K562 (cell line): ENCODE measurements at regions of chr2 and their contacts with region 1.

Region 1: DNA sequence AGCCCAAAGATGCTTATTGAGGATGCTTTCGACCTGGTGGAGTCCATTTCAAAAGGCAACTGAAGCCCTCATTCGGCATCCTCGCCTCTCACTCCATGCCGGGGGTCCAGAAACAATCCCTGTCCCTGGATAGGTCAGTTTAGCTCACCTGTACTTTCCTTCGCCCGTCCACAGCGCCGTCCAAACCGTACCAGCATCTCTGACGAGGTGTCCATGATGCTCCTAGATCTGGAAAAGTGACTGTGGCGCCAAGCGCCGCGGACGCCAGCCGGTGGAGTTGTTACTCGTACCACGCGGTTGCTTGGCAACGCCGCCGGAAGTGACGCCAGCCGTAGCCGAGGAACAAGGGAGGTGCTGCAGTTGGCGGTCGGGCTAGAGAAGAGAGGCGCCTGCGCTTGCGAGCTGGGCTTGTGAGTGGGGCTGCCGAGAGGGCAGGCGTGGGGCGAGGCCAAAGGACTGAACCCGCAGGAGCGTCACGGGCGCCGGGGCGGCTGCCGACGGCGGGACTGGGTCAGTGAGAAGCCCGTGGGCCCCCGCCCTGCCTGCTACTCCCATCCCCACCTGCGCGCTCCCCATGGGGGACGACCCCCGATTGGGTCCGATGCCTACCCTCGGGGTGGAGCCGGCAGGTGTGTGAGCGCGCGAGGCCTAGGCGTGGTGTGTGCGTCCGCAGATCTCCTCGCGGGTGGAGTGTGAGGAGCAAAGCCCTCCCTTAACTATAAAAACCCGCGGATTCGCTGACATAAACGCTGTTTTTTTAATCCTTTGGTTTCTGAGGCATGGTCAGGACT is at the starts of genes CFAP210 and PHOSPHO2:
- DNase-seq: peak; percentile 95 to 100 (median 96)
- ATAC-seq: peak; percentile 98
- H3K4me3 ChIP-seq: peak within 1 kb of the TSS; percentile 76
- H3K27ac ChIP-seq: peak within 1 kb of the TSS; percentile 88
- H3K4me1 ChIP-seq: peaks cover 9 to 14% of the 10 kb centered on the region in 2 experiments
- H3K27me3 ChIP-seq: no peaks in the 10 kb centered on the region
- CTCF ChIP-seq: peak in 1 of 3 experiments; percentile 4; a peak in 2 of 6 replicates
- EP300 ChIP-seq: no peak
- POLR2A ChIP-seq: peak; percentile 94
- RAD21 ChIP-seq: 0 out of 4 replicates have a peak, but pooled peaks of 1 of the 2 experiments have one; percentile 15
- polyA plus RNA-seq, gene CFAP210: 1.2 to 1.3 TPM
- polyA plus RNA-seq, gene PHOSPHO2: 7.8 to 8.9 TPM

Region 2: DNA sequence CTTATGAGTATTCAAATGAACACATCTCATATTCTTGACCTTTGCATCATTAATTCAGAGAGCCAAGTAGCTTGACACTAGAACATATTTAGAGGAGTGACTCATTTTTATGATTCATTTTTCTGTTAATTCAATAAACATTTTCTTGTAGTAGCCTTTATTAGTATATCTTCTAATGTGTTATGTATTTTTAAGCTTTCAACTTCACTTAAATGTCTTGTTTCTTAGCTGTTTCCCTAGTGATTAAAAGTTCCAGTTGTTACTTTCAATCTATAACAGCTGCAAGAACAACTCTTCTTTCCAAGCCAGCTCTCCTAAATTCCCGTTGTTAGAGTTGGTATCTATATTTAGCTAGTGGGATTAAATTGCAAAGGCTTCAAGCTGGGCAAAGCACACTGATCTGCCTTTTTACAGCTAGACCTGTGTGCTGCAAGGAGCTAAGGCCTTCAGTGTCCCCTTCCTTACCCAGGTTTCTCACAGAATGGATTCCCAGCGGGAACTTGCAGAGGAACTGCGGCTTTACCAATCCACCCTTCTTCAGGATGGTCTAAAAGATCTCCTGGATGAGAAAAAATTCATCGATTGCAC is 184.9 kb before region 1 on chr2 and contains the start of gene KLHL41:
- CTCF ChIA-PET with region 1: no interaction called
- POLR2A ChIA-PET with region 1: no interaction called
- in situ Hi-C with region 1: no loop called
- intact Hi-C with region 1: no loop called
- DNase-seq: no peak
- ATAC-seq: peak; percentile 65
- H3K4me3 ChIP-seq: no peak within 1 kb of the TSS
- H3K27ac ChIP-seq: no peak within 1 kb of the TSS
- H3K4me1 ChIP-seq: peaks cover 0 to 7% of the 10 kb centered on the region in 2 experiments; a peak in 2 of 5 replicates
- H3K27me3 ChIP-seq: no peaks in the 10 kb centered on the region
- CTCF ChIP-seq: no peak
- EP300 ChIP-seq: no peak
- POLR2A ChIP-seq: no peak
- RAD21 ChIP-seq: no peak
- polyA plus RNA-seq, gene KLHL41: 0.08 to 0.13 TPM

Region 3: DNA sequence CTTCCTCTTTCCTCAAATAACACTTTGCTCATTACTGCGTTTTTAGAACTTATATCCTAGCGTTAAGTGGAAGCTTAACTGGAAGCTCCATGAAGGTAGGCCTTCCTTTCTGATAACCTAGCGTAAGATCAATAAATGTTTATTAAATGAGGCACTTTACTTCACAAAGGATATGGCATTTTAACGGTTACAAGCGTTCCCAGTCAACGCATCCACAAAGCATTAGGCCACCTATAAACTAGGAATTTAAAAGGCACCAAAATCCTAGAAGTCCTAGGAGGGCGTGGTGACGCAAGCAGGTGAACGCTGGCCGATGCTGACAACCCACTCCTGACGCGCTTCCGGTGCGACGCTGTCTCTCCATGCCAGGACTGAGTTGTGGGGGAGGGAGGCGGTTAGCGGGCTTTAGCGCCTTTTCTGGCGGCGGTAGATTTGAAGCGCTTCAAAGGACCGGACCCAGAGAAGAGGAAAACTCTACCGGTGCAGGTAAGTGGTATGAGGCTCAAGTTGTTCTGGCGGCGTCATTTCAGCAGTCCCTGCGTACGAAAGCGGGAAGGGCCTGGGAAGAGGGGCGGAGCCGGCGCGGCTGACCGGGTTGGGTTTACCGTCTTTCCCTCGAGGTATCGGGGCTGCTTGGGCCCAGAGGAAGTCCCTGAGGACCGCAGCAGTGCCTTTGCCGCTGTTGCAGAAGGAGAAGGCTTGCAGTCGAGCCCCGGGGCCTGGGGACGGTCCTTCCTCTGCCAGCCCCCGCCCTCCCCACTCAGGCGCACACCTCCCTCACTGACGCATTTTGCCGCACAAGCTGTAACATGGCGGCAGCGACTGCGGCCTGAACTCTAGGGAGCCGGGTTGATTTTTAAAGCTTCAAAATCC is 110.1 kb before region 1 on chr2 and contains the start of gene PPIG:
- CTCF ChIA-PET with region 1: no interaction called
- POLR2A ChIA-PET with region 1: no interaction called
- in situ Hi-C with region 1: loop called (anchors 5 kb)
- intact Hi-C with region 1: no loop called
- DNase-seq: peak; percentile 91 to 98 (median 94)
- ATAC-seq: peak; percentile 96
- H3K4me3 ChIP-seq: peak within 1 kb of the TSS; percentile 64
- H3K27ac ChIP-seq: peak within 1 kb of the TSS; percentile 99
- H3K4me1 ChIP-seq: peaks cover 3 to 4% of the 10 kb centered on the region in 2 experiments; a peak in 2 of 5 replicates
- H3K27me3 ChIP-seq: no peaks in the 10 kb centered on the region
- CTCF ChIP-seq: 0 out of 6 replicates have a peak, but pooled peaks of 1 of the 3 experiments have one; percentile 13
- EP300 ChIP-seq: peak; percentile 61; the same call in 1 of the 2 replicates
- POLR2A ChIP-seq: peak; percentile 93
- RAD21 ChIP-seq: peak in 1 of 2 experiments; percentile 6; a peak in 1 of 4 replicates
- polyA plus RNA-seq, gene PPIG: 92.9 to 166 TPM

Region 4: DNA sequence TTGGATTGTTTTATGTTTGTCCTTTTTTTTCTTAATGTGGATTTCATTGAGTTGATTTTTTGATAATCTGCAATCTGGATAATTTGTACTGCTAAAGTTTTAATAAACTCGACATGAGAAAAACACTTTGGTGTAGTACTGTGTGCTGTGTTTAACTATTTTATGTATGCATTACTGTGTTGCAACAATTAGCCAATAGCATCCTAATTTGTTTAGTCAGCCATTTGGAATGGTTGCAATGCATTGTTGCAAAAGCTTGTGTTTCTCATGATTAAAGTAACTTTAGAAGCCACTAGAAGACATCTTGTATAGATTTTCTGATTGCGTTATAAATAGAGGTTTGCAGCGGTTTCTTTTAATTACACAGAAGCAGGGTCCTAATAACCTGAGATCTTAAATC is 56.7 kb before region 1 on chr2:
- CTCF ChIA-PET with region 1: no interaction called
- POLR2A ChIA-PET with region 1: interaction called, 3 read pairs
- in situ Hi-C with region 1: no loop called
- intact Hi-C with region 1: loop called (anchors 5 kb)
- DNase-seq: no peak
- ATAC-seq: no peak
- H3K4me3 ChIP-seq: no peak overlapping the region
- H3K27ac ChIP-seq: no peak overlapping the region
- H3K4me1 ChIP-seq: no peaks in the 10 kb centered on the region
- H3K27me3 ChIP-seq: no peaks in the 10 kb centered on the region
- CTCF ChIP-seq: no peak
- EP300 ChIP-seq: no peak
- POLR2A ChIP-seq: no peak
- RAD21 ChIP-seq: no peak

Region 5: GRCh38 chr2:169670215-169670651 is 24.1 kb before region 1 on chr2:
- CTCF ChIA-PET with region 1: no interaction called
- POLR2A ChIA-PET with region 1: interaction called, 11 read pairs
- in situ Hi-C with region 1: no loop called
- intact Hi-C with region 1: loop called (anchors 1 kb)
- DNase-seq: peak; percentile 66 to 84 (median 76)
- ATAC-seq: peak; percentile 86
- H3K4me3 ChIP-seq: no peak overlapping the region
- H3K27ac ChIP-seq: peak overlapping the region; percentile 65
- H3K4me1 ChIP-seq: peaks cover 0 to 49% of the 10 kb centered on the region in 2 experiments; a peak in 3 of 5 replicates
- H3K27me3 ChIP-seq: no peaks in the 10 kb centered on the region
- CTCF ChIP-seq: no peak
- EP300 ChIP-seq: peak; percentile 82; the same call in 1 of the 2 replicates
- POLR2A ChIP-seq: no peak
- RAD21 ChIP-seq: no peak

Region 6: DNA sequence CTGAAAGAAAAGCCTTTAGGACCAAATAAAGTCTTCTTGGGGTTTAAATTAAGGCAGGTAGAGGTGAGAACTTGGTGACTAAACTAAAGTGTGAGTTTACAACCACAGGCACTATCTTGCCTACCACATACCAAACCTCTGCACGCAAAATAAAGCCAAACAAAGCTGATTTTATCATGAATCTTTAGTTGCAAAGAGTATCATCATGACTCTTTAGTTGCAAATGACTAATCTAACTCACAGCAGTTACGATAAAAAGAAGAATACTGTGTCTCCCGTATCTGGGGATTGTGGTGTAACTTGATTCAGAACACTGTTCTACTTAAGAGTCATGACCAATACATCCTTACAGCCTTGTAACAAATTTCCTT is 11.3 kb before region 1 on chr2:
- CTCF ChIA-PET with region 1: no interaction called
- POLR2A ChIA-PET with region 1: interaction called, 12 read pairs
- in situ Hi-C with region 1: no loop called
- intact Hi-C with region 1: no loop called
- DNase-seq: no peak
- ATAC-seq: peak; percentile 47
- H3K4me3 ChIP-seq: no peak overlapping the region
- H3K27ac ChIP-seq: no peak overlapping the region
- H3K4me1 ChIP-seq: peaks cover 0 to 6% of the 10 kb centered on the region in 2 experiments; a peak in 1 of 5 replicates
- H3K27me3 ChIP-seq: no peaks in the 10 kb centered on the region
- CTCF ChIP-seq: no peak
- EP300 ChIP-seq: no peak
- POLR2A ChIP-seq: no peak
- RAD21 ChIP-seq: no peak

Region 7: GRCh38 chr2:169705927-169706326 is 11.6 kb after region 1 on chr2:
- CTCF ChIA-PET with region 1: no interaction called
- POLR2A ChIA-PET with region 1: interaction called, 45 read pairs
- in situ Hi-C with region 1: no loop called
- intact Hi-C with region 1: no loop called
- DNase-seq: no peak
- ATAC-seq: no peak
- H3K4me3 ChIP-seq: no peak overlapping the region
- H3K27ac ChIP-seq: no peak overlapping the region
- H3K4me1 ChIP-seq: no peaks in the 10 kb centered on the region
- H3K27me3 ChIP-seq: no peaks in the 10 kb centered on the region
- CTCF ChIP-seq: no peak
- EP300 ChIP-seq: no peak
- POLR2A ChIP-seq: no peak
- RAD21 ChIP-seq: no peak